ENCODE measurements at regions of chr15 and their contacts with region 1.

Region 1: GRCh38 chr15:98904544-98904943 is 103.0 kb downstream of the PGPEP1L start:
- H3K4me3 ChIP-seq: no peak overlapping the region
- H3K27ac ChIP-seq: no peak overlapping the region
- H3K4me1 ChIP-seq: no peaks in the 10 kb centered on the region
- CTCF ChIP-seq: peak; percentile 63; the same call in 1 of the 2 replicates

Region 2: DNA sequence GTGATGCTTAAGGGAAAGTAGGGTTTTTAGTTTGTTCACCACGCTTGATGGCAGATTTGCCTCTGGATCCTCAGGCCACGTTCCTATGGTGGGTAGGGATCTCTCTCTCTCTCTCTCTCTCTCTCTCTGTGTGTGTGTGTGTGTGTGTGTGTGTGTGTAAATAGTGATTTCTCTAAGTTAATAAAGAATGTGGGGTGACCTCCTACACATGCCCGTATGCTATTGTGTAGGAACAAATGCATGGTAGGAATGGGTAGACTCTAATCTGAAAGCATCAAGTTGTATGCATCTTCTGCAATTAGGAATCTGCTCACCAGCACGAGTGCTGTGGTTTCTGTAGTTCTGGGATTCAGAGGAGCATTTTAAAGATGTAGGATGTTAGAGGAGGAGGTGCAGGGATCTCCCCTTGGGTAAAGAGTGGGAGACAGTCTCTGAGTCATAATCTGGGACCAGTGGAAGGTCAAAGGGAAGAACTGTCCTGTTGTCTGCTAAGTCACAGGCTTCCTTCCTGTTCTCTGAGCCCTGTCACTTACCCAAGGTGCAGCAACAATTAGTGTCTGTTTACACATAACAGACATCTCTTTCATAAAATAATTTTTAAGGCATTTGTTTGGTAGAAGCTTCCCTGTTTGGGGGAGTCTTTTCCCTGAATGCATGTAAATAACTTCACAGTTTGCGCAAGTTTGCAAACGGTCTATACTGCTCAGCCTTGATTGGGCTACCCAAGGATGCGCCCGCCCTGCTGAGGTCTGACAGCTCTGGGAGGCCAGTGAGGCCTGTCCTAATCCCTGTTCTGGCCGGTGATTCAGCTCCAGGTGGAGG is 116.4 kb before region 1 on chr15:
- CTCF ChIA-PET with region 1: interaction called, 10 read pairs
- POLR2A ChIA-PET with region 1: no interaction called
- H3K4me3 ChIP-seq: no peak overlapping the region
- H3K27ac ChIP-seq: no peak overlapping the region
- H3K4me1 ChIP-seq: peaks cover 38% of the 10 kb centered on the region
- CTCF ChIP-seq: no peak

Region 3: GRCh38 chr15:98856218-98856907 is 48.2 kb before region 1 on chr15:
- CTCF ChIA-PET with region 1: interaction called, 22 read pairs
- POLR2A ChIA-PET with region 1: no interaction called
- H3K4me3 ChIP-seq: no peak overlapping the region
- H3K27ac ChIP-seq: no peak overlapping the region
- H3K4me1 ChIP-seq: peaks cover 52% of the 10 kb centered on the region
- CTCF ChIP-seq: no peak

Region 4: GRCh38 chr15:98873441-98874201 is 30.9 kb before region 1 on chr15:
- CTCF ChIA-PET with region 1: interaction called, 11 read pairs
- POLR2A ChIA-PET with region 1: interaction called, 3 read pairs
- H3K4me3 ChIP-seq: peak overlapping the region; percentile 1
- H3K27ac ChIP-seq: peak overlapping the region; percentile 18; the same call in 1 of the 2 replicates
- H3K4me1 ChIP-seq: peaks cover 32% of the 10 kb centered on the region
- CTCF ChIP-seq: no peak

Region 5: DNA sequence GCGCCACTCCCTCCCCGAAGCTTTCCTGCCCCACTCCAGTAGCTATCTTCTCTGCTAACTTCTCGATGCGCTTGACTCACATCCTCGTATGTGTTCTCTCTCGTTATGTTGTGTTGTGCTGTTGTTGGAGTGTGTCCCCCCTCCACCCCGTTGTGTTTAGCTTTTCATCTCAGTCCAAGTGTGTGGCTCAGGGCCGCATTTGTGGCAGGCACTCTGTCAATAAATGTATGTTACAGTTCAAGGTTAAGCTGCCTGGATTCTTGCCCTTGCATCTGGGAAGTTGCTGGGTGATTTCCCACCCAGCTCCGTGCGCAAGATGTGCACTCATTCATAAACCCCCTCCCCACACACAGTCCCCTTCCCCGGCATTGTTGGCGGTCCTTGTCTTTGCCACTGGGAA is 31.2 kb after region 1 on chr15:
- CTCF ChIA-PET with region 1: no interaction called
- POLR2A ChIA-PET with region 1: no interaction called
- H3K4me3 ChIP-seq: no peak overlapping the region
- H3K27ac ChIP-seq: no peak overlapping the region
- H3K4me1 ChIP-seq: no peaks in the 10 kb centered on the region
- CTCF ChIP-seq: no peak